ENCODE measurements at regions of chr14 and their contacts with region 1.

Region 1: DNA sequence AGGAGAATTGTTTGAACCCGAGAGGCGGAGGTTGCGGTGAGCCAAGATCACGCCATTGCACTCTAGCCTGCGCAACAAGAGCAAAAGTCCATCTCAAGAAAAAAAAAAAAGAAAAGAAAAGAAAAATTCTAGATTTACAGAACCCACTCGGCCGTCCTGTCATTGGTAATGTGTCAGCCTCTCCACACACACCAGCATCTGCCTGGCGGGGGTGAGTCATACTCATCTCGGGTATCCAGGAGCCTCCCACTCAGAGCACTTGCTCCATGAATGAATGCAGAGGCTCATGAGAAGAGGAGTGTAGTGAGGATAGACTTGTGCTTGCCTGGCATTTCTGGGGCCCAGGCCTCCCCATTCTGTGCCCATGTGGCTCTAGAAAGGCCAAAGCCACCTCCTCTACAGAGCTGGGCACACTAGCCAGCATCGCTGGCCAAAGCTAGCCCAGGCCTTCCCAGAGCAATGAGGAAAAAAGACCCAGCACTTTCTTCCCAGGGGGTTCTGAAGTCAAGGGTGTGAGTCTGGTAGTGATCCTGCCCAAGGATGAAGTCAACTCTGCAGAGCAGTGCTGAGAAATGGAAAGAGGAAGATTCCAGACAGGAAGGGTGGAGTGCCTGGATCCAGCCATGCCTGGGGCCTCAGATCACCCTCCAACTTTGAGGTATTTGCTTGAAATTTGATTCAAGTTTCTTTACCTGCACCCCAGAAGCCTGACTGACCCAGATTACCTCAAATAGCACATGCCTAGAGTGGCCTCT is 31.2 kb upstream of the KLC1 start:
- DNase-seq: no peak
- ATAC-seq: peak; percentile 58; the same call in 1 of the 2 replicates
- H3K4me3 ChIP-seq: no peak overlapping the region
- H3K27ac ChIP-seq: no peak overlapping the region
- H3K4me1 ChIP-seq: peaks cover 8% of the 10 kb centered on the region
- H3K27me3 ChIP-seq: no peaks in the 10 kb centered on the region
- CTCF ChIP-seq: no peak

Region 2: DNA sequence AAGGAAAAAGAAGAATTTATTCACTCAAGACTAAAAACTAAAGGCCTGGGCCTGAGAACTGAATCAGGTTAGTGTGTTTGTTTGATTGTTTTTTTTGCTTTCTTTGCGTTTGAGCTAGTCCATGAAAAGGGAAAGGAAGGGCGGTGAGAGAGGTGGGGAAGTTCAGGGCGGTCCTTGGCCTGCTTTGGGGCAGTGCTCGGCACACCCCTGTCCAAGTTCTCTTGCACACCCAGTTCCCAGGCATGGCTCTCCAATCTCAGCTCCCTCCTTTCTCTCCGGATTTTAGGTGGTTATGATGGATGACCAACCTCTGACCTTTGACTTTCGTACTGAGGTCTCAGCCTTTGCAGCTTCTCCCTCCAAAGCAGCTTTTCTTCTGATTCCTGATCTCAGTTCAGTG is 23.7 kb before region 1 on chr14:
- CTCF ChIA-PET with region 1: no interaction called
- POLR2A ChIA-PET with region 1: interaction called, 21 read pairs
- in situ Hi-C with region 1: no loop called
- intact Hi-C with region 1: no loop called
- DNase-seq: no peak
- ATAC-seq: no peak
- H3K4me3 ChIP-seq: no peak overlapping the region
- H3K27ac ChIP-seq: no peak overlapping the region
- H3K4me1 ChIP-seq: peaks cover 1% of the 10 kb centered on the region
- H3K27me3 ChIP-seq: no peaks in the 10 kb centered on the region
- CTCF ChIP-seq: no peak

Measured in Panc1 (cell line).